Activated CD4-positive, alpha-beta memory T cell treated with anti-CD3 and anti-CD28 coated beads for 36 hours (primary cell): ENCODE measurements at regions of chr12 and their contacts with region 1.

Region 1: DNA sequence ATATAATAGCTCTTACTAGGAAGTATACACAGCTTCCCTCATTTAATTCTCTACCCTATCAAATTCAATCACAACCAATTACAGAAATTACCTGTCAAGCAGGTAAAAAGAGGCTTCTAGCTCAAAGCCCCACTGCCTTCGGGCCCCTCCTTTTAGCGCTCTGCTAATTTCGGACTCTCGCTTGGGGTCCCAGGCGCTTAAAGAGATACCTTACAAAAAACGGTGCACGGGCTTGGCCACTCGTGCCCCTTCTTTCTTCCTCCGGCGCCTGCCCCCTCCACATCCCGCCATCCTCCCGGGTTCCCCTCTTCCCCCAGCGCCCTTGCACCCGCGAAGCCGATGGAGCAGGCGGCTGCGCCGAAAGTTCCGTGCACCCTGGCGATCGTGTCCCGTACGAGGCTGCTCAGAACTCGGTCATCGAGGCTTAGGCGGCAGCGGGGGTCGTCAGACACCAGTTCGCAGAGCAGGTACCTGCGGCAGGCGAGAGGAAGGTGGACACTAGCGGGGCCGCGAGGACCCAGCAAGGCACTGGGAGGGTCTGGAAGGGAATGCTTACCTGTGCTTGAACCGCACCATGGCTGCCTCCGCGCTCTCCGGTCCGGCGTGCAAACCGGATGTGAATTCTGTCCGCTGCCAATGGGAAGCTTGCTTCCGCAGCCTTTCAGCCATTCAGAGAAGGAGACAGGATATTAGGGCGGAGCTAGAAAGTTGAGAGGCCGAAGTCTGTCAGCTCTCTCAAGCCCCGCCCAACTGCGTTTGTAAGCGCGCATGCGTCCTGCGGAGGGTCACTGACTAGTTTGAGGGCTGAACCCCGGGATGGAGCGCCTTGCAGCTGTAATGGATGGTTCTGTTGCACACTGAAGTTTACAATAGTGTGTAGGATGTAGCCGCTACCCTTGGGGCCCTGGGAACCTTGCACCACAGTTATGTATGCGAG is at the start of gene POP5:
- DNase-seq: peak; percentile 97
- H3K4me3 Mint-ChIP-seq: peak within 1 kb of the TSS; percentile 96
- H3K27ac Mint-ChIP-seq: peak within 1 kb of the TSS; percentile 86
- H3K4me1 Mint-ChIP-seq: peaks cover 33% of the 10 kb centered on the region
- H3K27me3 Mint-ChIP-seq: no peaks in the 10 kb centered on the region
- total RNA-seq, gene POP5: 54.1 to 55.7 TPM

Region 2: DNA sequence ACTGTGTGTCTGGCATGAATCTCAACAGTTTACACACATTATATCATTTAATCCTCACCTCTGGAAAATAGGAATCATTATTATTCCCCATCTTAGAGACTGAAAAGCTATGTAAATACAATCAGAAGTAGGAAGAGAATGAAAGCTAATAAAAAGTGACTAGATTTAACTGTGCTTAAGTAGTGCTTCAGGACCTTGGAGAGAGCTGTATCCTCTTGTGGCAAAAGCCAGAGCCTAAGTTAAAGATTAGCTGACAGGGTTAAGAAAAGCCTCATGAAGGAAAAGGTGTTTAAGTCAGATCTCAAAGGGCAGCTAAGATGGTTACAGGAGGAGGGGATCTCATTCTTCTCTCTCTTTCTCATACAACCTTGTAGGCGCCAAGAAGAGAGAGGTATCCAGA is 1052.8 kb before region 1 on chr12:
- CTCF ChIA-PET with region 1: no interaction called
- POLR2A ChIA-PET with region 1: no interaction called
- intact Hi-C with region 1: no loop called
- DNase-seq: no peak
- H3K4me3 Mint-ChIP-seq: no peak overlapping the region
- H3K27ac Mint-ChIP-seq: no peak overlapping the region
- H3K4me1 Mint-ChIP-seq: no peaks in the 10 kb centered on the region
- H3K27me3 Mint-ChIP-seq: peaks cover 2% of the 10 kb centered on the region

Region 3: DNA sequence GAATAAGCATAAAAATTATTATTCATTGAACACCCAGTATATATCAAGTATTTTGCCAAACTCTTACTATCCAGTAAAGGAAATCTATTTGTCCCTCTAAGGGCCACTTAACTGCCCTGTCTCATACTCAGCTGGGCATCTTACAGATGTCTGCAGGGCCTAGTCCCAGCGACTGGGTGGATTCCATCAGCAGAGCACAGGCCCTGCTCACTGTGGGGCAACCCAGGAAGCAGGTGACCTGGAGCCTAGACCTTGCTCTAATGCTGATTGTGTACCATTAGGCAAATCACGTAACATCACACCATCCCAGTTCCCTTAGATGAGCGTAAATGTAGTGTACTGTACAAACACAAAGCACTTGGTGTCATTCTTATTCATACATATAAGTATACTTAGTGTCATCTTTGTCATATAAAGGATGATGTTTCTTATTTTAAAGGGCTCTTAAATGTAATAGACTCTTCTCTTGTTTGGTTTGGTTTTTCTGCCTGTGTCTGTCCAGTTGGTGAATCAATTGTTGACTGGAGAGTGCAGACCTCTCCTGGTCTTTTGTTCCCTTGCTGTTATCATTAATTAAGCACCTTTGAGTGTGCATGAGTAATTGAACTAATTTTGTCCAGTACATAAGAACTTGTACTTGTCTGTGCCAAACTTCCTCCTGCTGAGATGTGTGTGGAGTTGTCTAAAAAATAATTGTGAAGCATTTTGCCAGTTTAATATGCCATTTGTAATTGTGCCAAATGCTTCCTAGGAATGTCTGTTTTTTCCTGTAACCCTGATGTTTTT is 513.8 kb before region 1 on chr12:
- CTCF ChIA-PET with region 1: no interaction called
- POLR2A ChIA-PET with region 1: no interaction called
- intact Hi-C with region 1: no loop called
- DNase-seq: no peak
- H3K4me3 Mint-ChIP-seq: no peak overlapping the region
- H3K27ac Mint-ChIP-seq: no peak overlapping the region
- H3K4me1 Mint-ChIP-seq: no peaks in the 10 kb centered on the region
- H3K27me3 Mint-ChIP-seq: no peaks in the 10 kb centered on the region

Region 4: DNA sequence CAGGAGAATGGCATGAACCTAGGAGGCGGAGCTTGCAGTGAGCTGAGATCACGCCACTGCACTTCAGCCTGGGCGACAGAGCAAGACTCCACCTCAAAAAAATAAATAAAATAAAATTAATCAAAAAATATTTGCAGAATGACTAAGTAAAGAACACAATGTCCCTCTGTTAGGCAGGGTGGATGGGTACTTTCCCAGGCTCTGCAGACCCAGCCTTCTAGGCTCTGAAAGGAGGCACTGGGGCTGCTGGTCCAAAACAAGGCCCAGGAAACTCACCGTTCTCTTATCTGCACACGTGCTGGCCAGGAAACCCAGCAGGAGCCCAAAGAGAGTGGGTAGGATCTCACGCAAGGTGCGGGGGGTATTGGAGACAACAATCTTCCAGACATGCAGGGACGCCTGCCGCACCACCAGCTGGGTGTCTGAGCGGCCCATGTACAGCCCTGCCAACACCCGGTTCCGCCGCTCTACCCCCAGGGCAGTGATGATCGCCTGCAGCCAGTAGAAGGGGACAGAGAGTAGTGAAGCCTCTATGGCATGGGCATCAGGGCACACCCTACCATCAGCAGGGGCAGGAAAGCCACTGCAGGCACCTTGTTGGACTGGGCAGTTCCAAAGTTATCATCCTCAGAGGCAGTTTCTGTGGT is 438.7 kb before region 1 on chr12:
- CTCF ChIA-PET with region 1: no interaction called
- POLR2A ChIA-PET with region 1: no interaction called
- intact Hi-C with region 1: no loop called
- DNase-seq: no peak
- H3K4me3 Mint-ChIP-seq: no peak overlapping the region
- H3K27ac Mint-ChIP-seq: no peak overlapping the region
- H3K4me1 Mint-ChIP-seq: no peaks in the 10 kb centered on the region
- H3K27me3 Mint-ChIP-seq: no peaks in the 10 kb centered on the region

Region 5: GRCh38 chr12:120437754-120438494 is 143.1 kb before region 1 on chr12 and contains the start of gene COX6A1:
- CTCF ChIA-PET with region 1: interaction called, 6 read pairs
- POLR2A ChIA-PET with region 1: no interaction called
- intact Hi-C with region 1: loop called (anchors 1 kb)
- DNase-seq: peak; percentile 99
- H3K4me3 Mint-ChIP-seq: peak within 1 kb of the TSS; percentile 99
- H3K27ac Mint-ChIP-seq: peak within 1 kb of the TSS; percentile 92
- H3K4me1 Mint-ChIP-seq: peaks cover 22% of the 10 kb centered on the region
- H3K27me3 Mint-ChIP-seq: peaks cover 2% of the 10 kb centered on the region
- total RNA-seq, gene COX6A1: 474 to 478 TPM

Region 6: GRCh38 chr12:120649442-120650232 is 68.6 kb after region 1 on chr12:
- CTCF ChIA-PET with region 1: interaction called, 161 read pairs
- POLR2A ChIA-PET with region 1: interaction called, 8 read pairs
- intact Hi-C with region 1: loop called (anchors 1 kb)
- DNase-seq: no peak
- H3K4me3 Mint-ChIP-seq: peak overlapping the region; percentile 45
- H3K27ac Mint-ChIP-seq: no peak overlapping the region
- H3K4me1 Mint-ChIP-seq: peaks cover 15% of the 10 kb centered on the region
- H3K27me3 Mint-ChIP-seq: peaks cover 44% of the 10 kb centered on the region

Region 7: GRCh38 chr12:120725659-120726509 is 144.8 kb after region 1 on chr12 and contains the start of gene ACADS:
- CTCF ChIA-PET with region 1: interaction called, 8 read pairs
- POLR2A ChIA-PET with region 1: no interaction called
- intact Hi-C with region 1: loop called (anchors 5 kb)
- DNase-seq: peak; percentile 91
- H3K4me3 Mint-ChIP-seq: peak within 1 kb of the TSS; percentile 87
- H3K27ac Mint-ChIP-seq: no peak within 1 kb of the TSS
- H3K4me1 Mint-ChIP-seq: peaks cover 17% of the 10 kb centered on the region
- H3K27me3 Mint-ChIP-seq: no peaks in the 10 kb centered on the region
- total RNA-seq, gene ACADS: 15.6 to 16.6 TPM

Region 8: DNA sequence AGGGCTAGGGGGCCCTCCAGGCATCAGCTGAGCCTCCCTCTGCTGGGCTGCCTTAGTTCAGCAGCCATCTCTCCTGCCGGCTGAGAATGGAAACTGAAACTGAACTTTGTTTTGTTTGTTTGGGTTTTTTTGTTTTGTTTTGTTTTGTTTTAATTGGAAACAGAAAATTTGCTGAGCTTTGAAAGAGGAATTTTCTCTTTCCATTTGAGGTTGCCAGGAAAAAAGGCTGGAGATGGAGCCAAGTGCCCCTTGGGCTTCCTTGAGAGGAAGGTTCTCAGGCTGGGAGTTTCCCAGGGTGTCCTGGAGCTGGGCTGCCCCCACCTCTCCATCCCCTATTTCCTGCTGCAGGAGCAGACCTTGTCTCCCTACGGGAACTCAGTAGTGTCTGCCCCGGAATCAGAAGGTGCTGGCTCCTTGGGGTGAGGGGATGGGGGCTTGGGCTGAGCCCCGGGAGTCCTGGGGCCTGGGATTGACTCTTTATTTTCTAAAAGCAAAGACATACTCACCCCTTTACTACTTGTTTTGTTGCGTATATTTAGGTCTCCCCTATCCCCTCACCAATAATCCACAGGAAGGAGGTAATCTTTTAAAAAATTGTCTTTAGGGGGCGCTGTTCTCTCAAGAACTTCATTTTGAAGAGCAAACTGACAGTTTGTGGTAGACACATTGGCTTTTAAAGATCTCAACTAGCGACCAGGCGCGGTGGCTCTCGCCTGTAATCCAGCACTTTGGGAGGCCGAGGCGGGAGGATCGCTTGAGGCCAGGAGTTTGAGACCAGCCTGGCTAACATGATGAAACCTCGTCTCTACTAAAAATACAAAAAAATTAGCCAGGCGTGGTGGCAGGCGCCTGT is 479.3 kb after region 1 on chr12:
- CTCF ChIA-PET with region 1: interaction called, 13 read pairs
- POLR2A ChIA-PET with region 1: no interaction called
- intact Hi-C with region 1: no loop called
- DNase-seq: peak; percentile 74
- H3K4me3 Mint-ChIP-seq: peak overlapping the region; percentile 70
- H3K27ac Mint-ChIP-seq: peak overlapping the region; percentile 87
- H3K4me1 Mint-ChIP-seq: peaks cover 11% of the 10 kb centered on the region
- H3K27me3 Mint-ChIP-seq: no peaks in the 10 kb centered on the region